Activated CD4-positive, alpha-beta T cell treated with anti-CD3 and anti-CD28 coated beads for 36 hours (primary cell): ENCODE measurements at regions of chr2 and their contacts with region 1.

Region 1: DNA sequence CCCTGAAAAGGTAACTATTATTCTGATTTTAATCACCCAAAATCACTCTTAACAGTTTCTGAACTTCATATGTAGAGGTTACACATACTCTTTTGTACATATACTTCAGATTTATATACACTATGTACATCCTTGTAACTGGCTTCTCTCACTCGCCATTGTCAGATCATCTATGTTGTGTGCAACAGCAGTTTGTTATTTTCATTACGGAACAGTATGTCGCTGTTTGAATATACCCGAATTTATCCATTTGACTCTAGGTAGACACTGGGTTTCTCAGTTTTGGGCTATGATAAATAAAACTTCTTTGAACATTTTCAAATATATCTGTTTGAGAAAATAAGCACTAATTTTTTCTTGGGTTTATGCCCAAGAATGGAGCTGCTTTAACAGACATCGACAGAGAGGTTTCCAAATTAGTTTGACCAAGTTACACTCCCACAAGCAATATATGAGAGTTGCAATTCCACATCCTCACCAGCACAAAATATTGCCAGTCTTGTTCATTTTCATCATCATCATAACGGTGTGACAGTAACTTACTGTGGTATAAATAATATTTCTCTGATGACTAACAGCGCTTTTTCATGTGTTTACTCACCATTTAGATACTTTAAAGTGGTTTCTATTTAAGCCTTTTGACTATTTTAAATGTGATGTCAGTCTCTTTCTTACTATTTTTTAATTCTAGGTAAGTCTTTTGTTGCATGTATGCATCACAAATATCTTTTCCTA is 80.9 kb downstream of the SMC6 start:
- DNase-seq: no peak
- ATAC-seq: peak; percentile 90
- H3K4me3 Mint-ChIP-seq: no peak overlapping the region
- H3K27ac Mint-ChIP-seq: no peak overlapping the region
- H3K4me1 Mint-ChIP-seq: peaks cover 18% of the 10 kb centered on the region
- H3K27me3 Mint-ChIP-seq: no peaks in the 10 kb centered on the region

Region 2: GRCh38 chr2:16773080-16773713 is 899.6 kb before region 1 on chr2:
- CTCF ChIA-PET with region 1: interaction called, 8 read pairs
- POLR2A ChIA-PET with region 1: no interaction called
- intact Hi-C with region 1: loop called in 1 of 2 experiments (anchors 1 kb)
- DNase-seq: peak; percentile 57
- ATAC-seq: peak; percentile 74
- H3K4me3 Mint-ChIP-seq: no peak overlapping the region
- H3K27ac Mint-ChIP-seq: no peak overlapping the region
- H3K4me1 Mint-ChIP-seq: no peaks in the 10 kb centered on the region
- H3K27me3 Mint-ChIP-seq: peaks cover 17% of the 10 kb centered on the region

Region 3: GRCh38 chr2:17309741-17310339 is 362.9 kb before region 1 on chr2:
- CTCF ChIA-PET with region 1: interaction called, 5 read pairs
- POLR2A ChIA-PET with region 1: no interaction called
- intact Hi-C with region 1: loop called in 1 of 2 experiments (anchors 10 kb)
- DNase-seq: peak; percentile 21
- ATAC-seq: no peak
- H3K4me3 Mint-ChIP-seq: no peak overlapping the region
- H3K27ac Mint-ChIP-seq: no peak overlapping the region
- H3K4me1 Mint-ChIP-seq: peaks cover 6% of the 10 kb centered on the region
- H3K27me3 Mint-ChIP-seq: peaks cover 12% of the 10 kb centered on the region

Region 4: GRCh38 chr2:17470855-17471641 is 201.7 kb before region 1 on chr2:
- CTCF ChIA-PET with region 1: interaction called, 5 read pairs
- POLR2A ChIA-PET with region 1: no interaction called
- intact Hi-C with region 1: loop called (anchors 2 to 5 kb)
- DNase-seq: no peak
- ATAC-seq: no peak
- H3K4me3 Mint-ChIP-seq: no peak overlapping the region
- H3K27ac Mint-ChIP-seq: no peak overlapping the region
- H3K4me1 Mint-ChIP-seq: no peaks in the 10 kb centered on the region
- H3K27me3 Mint-ChIP-seq: no peaks in the 10 kb centered on the region

Region 5: DNA sequence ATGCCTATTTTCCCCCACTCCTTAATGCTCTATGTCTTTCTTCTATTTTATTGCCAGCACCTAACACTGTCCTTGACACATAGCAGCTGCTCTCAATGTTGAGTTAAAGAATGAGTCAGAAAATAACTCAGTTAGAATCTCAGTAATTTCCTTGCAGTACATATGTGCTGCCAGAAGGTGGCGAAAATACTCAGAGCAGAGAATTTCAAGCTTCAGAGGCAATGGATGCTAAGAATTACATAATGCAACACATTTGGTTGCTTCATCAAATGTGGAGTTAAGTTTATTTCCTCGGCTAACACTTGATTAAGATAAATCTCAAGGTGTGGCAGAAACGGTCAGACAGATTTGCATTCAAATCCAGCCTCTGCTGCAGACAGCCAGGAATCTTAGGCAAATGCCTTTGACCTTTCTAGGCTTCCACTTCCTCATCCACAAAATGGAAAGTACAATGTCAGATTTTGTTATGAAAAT is 26.6 kb before region 1 on chr2:
- CTCF ChIA-PET with region 1: interaction called, 111 read pairs
- POLR2A ChIA-PET with region 1: no interaction called
- intact Hi-C with region 1: loop called (anchors 1 kb)
- DNase-seq: peak; percentile 67
- ATAC-seq: peak; percentile 84
- H3K4me3 Mint-ChIP-seq: no peak overlapping the region
- H3K27ac Mint-ChIP-seq: no peak overlapping the region
- H3K4me1 Mint-ChIP-seq: peaks cover 19% of the 10 kb centered on the region
- H3K27me3 Mint-ChIP-seq: no peaks in the 10 kb centered on the region

Region 6: GRCh38 chr2:17658251-17658843 is 14.4 kb before region 1 on chr2:
- CTCF ChIA-PET with region 1: interaction called, 18 read pairs
- POLR2A ChIA-PET with region 1: no interaction called
- intact Hi-C with region 1: no loop called
- DNase-seq: peak; percentile 43
- ATAC-seq: peak; percentile 89
- H3K4me3 Mint-ChIP-seq: no peak overlapping the region
- H3K27ac Mint-ChIP-seq: peak overlapping the region; percentile 24
- H3K4me1 Mint-ChIP-seq: peaks cover 19% of the 10 kb centered on the region
- H3K27me3 Mint-ChIP-seq: no peaks in the 10 kb centered on the region